ENCODE measurements at regions of chr1 and their contacts with region 1.

Region 1: DNA sequence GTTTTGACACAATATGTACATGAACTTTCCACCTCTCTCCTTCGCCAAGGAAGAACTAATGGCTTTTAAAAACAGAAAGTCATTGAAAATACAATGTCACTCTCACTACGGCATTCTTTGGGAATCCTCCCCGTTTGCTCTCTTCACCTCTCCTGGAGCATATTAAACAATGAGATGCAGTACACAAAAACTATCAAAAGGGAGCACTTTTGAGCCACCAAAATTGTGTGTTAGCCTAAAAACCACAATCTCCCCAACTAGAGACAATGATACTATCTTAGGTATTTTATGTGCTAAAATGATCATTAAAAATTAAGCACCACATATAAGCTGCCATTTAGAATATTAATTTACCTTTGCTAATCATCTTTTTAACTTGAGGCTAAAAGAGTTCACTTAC is 425.5 kb downstream of the KCTD3 start:
- DNase-seq: no peak
- H3K4me3 ChIP-seq: no peak overlapping the region
- H3K27ac ChIP-seq: no peak overlapping the region
- H3K27me3 ChIP-seq: no peaks in the 10 kb centered on the region
- CTCF ChIP-seq: peak; percentile 62

Region 2: GRCh38 chr1:216742625-216743024 is 750.0 kb after region 1 on chr1:
- CTCF ChIA-PET with region 1: interaction called, 10 read pairs
- POLR2A ChIA-PET with region 1: no interaction called
- DNase-seq: no peak
- H3K4me3 ChIP-seq: no peak overlapping the region
- H3K27ac ChIP-seq: no peak overlapping the region
- H3K27me3 ChIP-seq: no peaks in the 10 kb centered on the region
- CTCF ChIP-seq: peak; percentile 49

Measured in AG04450 (cell line).